BJ (cell line): ENCODE measurements at regions of chr2 and their contacts with region 1.

Region 1: DNA sequence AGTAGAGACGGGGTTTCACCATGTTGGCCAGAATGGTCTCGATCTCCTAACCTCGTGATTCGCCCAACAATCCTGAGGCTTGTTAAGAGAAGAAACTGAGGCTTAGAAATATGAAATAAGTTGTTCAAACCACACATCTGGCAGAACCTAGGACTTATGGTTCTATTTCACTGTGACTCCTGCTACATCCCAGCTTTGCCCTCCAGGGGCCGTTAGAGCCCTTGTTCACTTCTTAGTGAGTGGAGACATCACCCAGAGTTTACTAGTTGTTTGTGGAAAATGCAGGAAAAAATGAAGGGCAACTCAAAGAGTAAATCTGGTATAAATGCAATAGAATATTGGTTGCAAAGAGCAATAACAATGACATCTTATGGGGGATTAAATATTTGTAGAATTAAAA is 43.9 kb downstream of the MARCHF4 start:
- DNase-seq: no peak
- H3K4me3 ChIP-seq: no peak overlapping the region
- H3K27me3 ChIP-seq: no peaks in the 10 kb centered on the region
- CTCF ChIP-seq: peak; percentile 45

Region 2: GRCh38 chr2:216071111-216071851 is 257.1 kb before region 1 on chr2:
- CTCF ChIA-PET with region 1: no interaction called
- POLR2A ChIA-PET with region 1: no interaction called
- DNase-seq: no peak
- H3K4me3 ChIP-seq: no peak overlapping the region
- H3K27me3 ChIP-seq: no peaks in the 10 kb centered on the region
- CTCF ChIP-seq: no peak

Region 3: DNA sequence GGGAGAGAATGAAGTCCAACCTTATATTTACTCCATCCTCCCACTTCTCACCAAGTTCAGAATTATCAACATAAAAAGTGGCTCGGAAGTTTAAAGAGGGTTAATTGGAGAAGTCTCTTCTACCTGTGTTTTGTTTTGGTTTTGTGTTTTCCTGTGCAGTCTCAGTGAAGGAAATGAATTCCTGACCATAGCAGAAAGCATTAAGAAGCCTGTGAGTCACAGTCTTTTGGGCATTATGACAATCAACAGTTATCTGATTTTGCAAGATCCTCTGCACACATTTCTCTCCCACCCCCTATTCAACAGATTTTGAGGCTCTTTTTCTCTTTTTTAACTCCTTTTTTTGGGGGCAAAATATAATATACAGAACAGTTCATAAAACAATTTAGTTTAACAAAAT is 161.7 kb after region 1 on chr2:
- CTCF ChIA-PET with region 1: no interaction called
- POLR2A ChIA-PET with region 1: no interaction called
- DNase-seq: peak; percentile 41
- H3K4me3 ChIP-seq: no peak overlapping the region
- H3K27me3 ChIP-seq: no peaks in the 10 kb centered on the region
- CTCF ChIP-seq: no peak

Region 4: DNA sequence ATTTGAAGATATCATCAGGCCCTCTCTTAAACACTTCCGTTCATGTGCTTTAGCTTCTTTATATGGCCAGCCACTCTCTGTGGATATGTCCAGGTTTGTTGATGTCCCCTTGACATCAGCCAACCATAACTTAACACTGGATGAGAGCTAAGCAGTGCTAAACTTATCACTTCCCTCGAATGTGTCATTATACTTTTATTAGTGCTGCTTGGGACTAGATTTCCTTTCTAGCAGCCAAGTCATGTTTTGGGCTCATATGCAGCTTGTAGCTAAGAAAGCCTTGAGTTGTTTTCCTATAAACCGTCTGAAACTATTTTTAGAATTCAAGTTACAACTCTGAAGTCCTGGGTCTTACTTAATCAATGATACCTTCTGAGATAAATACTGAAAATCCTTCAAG is 676.3 kb after region 1 on chr2:
- CTCF ChIA-PET with region 1: no interaction called
- POLR2A ChIA-PET with region 1: interaction called, 11 read pairs
- DNase-seq: no peak
- H3K4me3 ChIP-seq: no peak overlapping the region
- H3K27me3 ChIP-seq: peaks cover 2% of the 10 kb centered on the region; the same call in 1 of the 2 replicates
- CTCF ChIP-seq: no peak